Naive thymus-derived CD4-positive, alpha-beta T cell (primary cell): ENCODE measurements at regions of chr20 and their contacts with region 1.

Region 1: DNA sequence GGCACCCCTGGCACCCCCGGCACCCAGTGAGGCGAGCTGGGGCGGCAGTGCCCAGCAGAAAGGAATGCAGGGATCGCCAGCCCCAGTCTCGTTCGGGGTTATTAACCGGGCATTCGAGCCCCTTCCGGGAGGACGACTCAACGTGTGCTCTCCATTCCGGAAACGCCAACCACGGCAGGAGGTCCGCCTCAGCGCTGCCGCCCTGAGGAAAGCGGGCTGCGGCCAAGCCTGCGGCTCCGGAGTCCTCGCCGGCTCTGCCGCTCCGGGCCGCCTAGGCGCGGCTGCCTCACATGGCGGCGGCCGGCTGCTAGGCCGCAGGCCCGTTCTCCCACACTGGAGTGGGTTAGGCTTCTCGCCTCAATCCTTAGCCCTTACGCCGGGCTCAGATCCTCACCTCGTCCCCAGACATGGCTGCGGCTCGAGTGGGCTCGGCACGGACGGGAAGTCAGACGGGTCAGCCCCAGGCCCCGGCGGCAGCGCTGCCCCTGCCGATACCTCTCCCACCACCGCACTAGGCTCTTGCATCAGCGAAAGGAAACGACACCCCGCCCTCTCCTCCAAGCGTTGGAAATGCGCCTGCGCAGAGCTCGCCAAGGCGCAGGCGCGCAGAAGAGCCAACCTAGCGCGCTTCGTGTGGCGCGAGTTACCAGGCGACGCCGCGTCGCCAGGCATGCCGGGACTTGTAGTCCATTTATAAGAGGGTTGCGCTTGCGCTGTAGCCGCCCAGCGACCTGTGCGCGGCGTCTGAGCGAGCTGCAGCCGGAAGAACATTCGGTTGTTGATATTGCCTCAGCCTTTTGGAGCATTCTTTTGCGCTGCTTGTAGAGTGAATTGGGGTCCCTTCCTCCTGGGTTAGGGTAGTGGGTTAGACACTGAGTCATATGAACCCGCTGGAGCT is at the start of gene EIF2S2:
- DNase-seq: peak; percentile 88 to 97 (median 95)
- ATAC-seq: peak; percentile 95
- H3K4me3 ChIP-seq: peak within 1 kb of the TSS; percentile 92
- H3K4me3 Mint-ChIP-seq: peak within 1 kb of the TSS; percentile 87 to 98 (median 96)
- H3K27ac ChIP-seq: peak within 1 kb of the TSS; percentile 89
- H3K27ac Mint-ChIP-seq: peak within 1 kb of the TSS; percentile 96 to 99 (median 98)
- H3K4me1 ChIP-seq: peaks cover 24 to 34% of the 10 kb centered on the region in 2 donors
- H3K4me1 Mint-ChIP-seq: peaks cover 34 to 53% (median 47%) of the 10 kb centered on the region in 7 donors
- H3K27me3 ChIP-seq: no peaks in the 10 kb centered on the region
- H3K27me3 Mint-ChIP-seq: peaks cover 0 to 15% (median 0%) of the 10 kb centered on the region in 5 donors
- total RNA-seq, gene EIF2S2: 16.8 to 68.4 (median 48.6) TPM

Region 2: DNA sequence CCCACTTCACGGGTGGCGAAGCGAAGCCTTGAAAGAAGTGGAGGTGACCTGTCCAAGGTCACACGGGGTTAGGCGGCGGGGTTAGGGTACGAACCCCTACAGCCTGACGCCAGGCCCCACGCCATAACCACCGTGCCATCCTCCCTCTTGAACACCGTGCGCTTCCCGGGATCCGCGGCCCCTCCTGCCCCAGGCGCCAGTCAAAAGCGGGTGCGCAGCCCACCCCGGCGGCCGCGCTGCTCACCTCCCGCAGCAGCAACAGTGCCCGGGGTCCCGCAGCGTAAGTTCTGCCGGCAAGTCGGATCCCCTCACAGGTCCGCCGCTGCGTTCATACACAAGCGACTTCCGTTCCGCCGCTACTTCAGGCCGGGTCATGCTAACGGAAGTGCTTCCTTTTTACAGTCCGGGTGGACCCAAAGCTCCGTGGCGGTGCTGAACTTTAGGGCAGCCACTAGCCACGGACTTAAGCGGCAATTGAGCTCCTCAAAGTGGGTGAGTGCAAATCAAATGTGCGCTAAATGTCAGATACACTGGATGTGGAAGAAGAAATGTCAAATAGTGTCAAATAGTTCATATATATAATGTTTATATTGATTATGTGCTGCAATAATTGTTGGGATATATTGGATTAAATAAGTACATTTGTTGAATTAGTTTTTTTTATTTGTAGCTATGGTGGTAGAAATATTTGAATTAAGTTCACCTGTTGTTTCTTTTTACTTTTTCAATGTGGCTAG is 710.6 kb before region 1 on chr20 and contains the start of gene CDK5RAP1:
- CTCF ChIA-PET with region 1: no interaction called
- POLR2A ChIA-PET with region 1: interaction called, 10 read pairs
- intact Hi-C with region 1: loop called in 1 of 2 experiments (anchors 1 kb)
- DNase-seq: peak; percentile 62 to 84 (median 82)
- ATAC-seq: peak; percentile 98
- H3K4me3 ChIP-seq: peak within 1 kb of the TSS; percentile 93
- H3K4me3 Mint-ChIP-seq: peak within 1 kb of the TSS; percentile 92 to 99 (median 98)
- H3K27ac ChIP-seq: peak within 1 kb of the TSS; percentile 80
- H3K27ac Mint-ChIP-seq: peak within 1 kb of the TSS; percentile 89 to 94 (median 92)
- H3K4me1 ChIP-seq: peaks cover 23 to 33% of the 10 kb centered on the region in 2 donors
- H3K4me1 Mint-ChIP-seq: peaks cover 36 to 71% (median 64%) of the 10 kb centered on the region in 7 donors
- H3K27me3 ChIP-seq: no peaks in the 10 kb centered on the region
- H3K27me3 Mint-ChIP-seq: no peaks in the 10 kb centered on the region
- total RNA-seq, gene CDK5RAP1: 33.6 to 51.8 (median 49.4) TPM

Region 3: GRCh38 chr20:33554914-33555420 is 557.0 kb before region 1 on chr20:
- CTCF ChIA-PET with region 1: no interaction called
- POLR2A ChIA-PET with region 1: no interaction called
- intact Hi-C with region 1: loop called in 1 of 2 experiments (anchors 2 kb)
- DNase-seq: peak in 7 of 9 donors; percentile 72 to 92 (median 88)
- ATAC-seq: peak; percentile 98
- H3K4me3 ChIP-seq: peak overlapping the region; percentile 3
- H3K4me3 Mint-ChIP-seq: peak overlapping the region; percentile 51 to 83 (median 75)
- H3K27ac ChIP-seq: peak overlapping the region; percentile 81
- H3K27ac Mint-ChIP-seq: peak overlapping the region; percentile 90 to 98 (median 95)
- H3K4me1 ChIP-seq: peaks cover 16% of the 10 kb centered on the region in 2 donors
- H3K4me1 Mint-ChIP-seq: peaks cover 15 to 49% (median 39%) of the 10 kb centered on the region in 7 donors
- H3K27me3 ChIP-seq: no peaks in the 10 kb centered on the region
- H3K27me3 Mint-ChIP-seq: no peaks in the 10 kb centered on the region

Region 4: GRCh38 chr20:33686100-33686983 is 425.6 kb before region 1 on chr20 and contains the start of gene E2F1:
- CTCF ChIA-PET with region 1: no interaction called
- POLR2A ChIA-PET with region 1: no interaction called
- intact Hi-C with region 1: loop called (anchors 1 kb)
- DNase-seq: peak; percentile 85 to 98 (median 90)
- ATAC-seq: peak; percentile 98
- H3K4me3 ChIP-seq: peak within 1 kb of the TSS; percentile 55
- H3K4me3 Mint-ChIP-seq: peak within 1 kb of the TSS; percentile 74 to 95 (median 84)
- H3K27ac ChIP-seq: peak within 1 kb of the TSS; percentile 59
- H3K27ac Mint-ChIP-seq: peak within 1 kb of the TSS; percentile 6 to 95 (median 84)
- H3K4me1 ChIP-seq: peaks cover 3 to 27% of the 10 kb centered on the region in 2 donors
- H3K4me1 Mint-ChIP-seq: peaks cover 11 to 72% (median 38%) of the 10 kb centered on the region in 7 donors
- H3K27me3 ChIP-seq: no peaks in the 10 kb centered on the region
- H3K27me3 Mint-ChIP-seq: no peaks in the 10 kb centered on the region
- total RNA-seq, gene E2F1: 0.98 to 61.6 (median 1.6) TPM

Region 5: DNA sequence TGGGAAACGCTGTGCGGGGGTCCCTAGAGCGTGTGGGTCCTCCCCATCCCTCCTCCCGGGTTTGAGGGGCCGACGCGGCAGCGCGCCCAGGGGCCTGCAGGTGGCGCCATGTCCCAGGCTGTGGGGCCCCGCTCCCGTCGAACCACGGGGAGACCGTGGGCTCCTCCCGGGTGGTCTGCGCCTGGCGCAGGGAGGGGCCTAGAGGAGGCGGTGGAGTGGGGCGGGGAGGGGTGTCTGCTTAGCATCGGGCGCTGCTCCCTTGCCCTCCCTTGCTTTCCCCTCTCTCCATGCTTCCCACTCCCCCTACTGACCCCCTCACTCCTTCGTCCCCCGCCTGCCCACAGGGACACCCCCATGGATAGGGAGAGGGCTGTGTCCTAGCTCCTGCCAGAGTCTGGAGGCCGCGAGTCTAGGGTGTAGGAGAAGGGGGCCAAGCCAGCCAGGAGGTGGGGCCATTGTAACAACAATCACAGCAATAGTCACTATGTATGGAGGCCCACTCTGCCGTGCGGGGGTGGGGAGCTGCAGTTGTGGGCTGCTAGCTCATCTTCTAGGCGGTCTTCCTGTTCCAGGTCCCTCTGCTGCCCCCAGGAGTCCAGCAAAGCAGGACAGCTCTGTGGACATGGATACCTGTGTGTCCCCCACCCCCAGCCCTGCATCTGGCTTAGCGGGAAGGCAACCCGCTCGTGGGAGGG is 249.1 kb before region 1 on chr20:
- CTCF ChIA-PET with region 1: no interaction called
- POLR2A ChIA-PET with region 1: interaction called, 3 read pairs
- intact Hi-C with region 1: loop called in 1 of 2 experiments (anchors 5 kb)
- DNase-seq: peak in 8 of 9 donors; percentile 23 to 58 (median 43)
- ATAC-seq: peak; percentile 64
- H3K4me3 ChIP-seq: no peak overlapping the region
- H3K4me3 Mint-ChIP-seq: no peak overlapping the region
- H3K27ac ChIP-seq: no peak overlapping the region
- H3K27ac Mint-ChIP-seq: no peak overlapping the region
- H3K4me1 ChIP-seq: peaks cover 18 to 26% of the 10 kb centered on the region in 2 donors
- H3K4me1 Mint-ChIP-seq: peaks cover 18 to 31% (median 27%) of the 10 kb centered on the region in 7 donors
- H3K27me3 ChIP-seq: no peaks in the 10 kb centered on the region
- H3K27me3 Mint-ChIP-seq: peaks cover 0 to 3% (median 0%) of the 10 kb centered on the region in 5 donors

Region 6: DNA sequence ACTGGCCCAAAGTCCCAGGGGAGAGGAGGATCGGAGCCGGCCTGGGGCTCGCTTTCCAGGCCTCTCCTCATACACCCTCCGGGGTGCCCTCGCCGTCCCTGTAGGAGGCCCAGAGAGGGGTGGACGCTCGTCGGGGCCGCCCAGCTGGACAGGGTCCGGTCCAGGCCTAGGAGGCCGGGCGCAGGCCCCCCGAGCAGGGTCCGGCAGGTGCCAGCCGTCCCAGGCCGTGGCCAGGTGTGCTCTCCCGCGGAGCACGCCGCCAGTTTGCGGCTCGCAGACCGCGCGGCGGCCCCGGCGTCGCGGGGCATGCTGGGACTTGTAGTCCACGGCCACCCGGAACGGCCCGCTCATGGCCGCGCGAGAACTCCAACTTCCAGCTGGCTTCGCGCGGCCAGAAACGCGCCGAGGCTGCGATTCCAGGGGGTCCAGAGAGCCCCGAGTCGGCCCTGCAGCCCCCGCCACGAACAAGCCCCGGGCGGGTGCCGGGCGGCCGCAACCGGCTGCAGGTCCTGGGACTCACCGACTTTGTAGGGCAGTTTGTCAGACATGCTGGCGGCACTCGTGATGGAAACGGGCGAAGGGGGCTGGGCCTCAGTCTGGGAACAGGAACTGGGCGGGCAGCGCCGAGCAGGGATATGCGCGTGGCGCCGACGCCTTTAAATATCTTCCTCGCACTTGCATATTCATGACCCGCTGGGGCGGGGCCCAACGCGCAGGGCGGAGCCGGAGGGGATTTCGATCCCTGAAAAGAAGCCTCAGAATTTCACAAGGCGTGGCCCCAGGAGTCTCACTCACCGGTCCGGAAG is 191.0 kb after region 1 on chr20 and contains the start of gene AHCY:
- CTCF ChIA-PET with region 1: no interaction called
- POLR2A ChIA-PET with region 1: interaction called, 4 read pairs
- intact Hi-C with region 1: loop called in 1 of 2 experiments (anchors 1 kb)
- DNase-seq: peak; percentile 84 to 95 (median 92)
- ATAC-seq: peak; percentile 96
- H3K4me3 ChIP-seq: peak within 1 kb of the TSS; percentile 91
- H3K4me3 Mint-ChIP-seq: peak within 1 kb of the TSS; percentile 90 to 96 (median 91)
- H3K27ac ChIP-seq: peak within 1 kb of the TSS; percentile 87
- H3K27ac Mint-ChIP-seq: peak within 1 kb of the TSS; percentile 89 to 95 (median 93)
- H3K4me1 ChIP-seq: peaks cover 3 to 6% of the 10 kb centered on the region in 2 donors
- H3K4me1 Mint-ChIP-seq: peaks cover 0 to 27% (median 14%) of the 10 kb centered on the region in 7 donors
- H3K27me3 ChIP-seq: no peaks in the 10 kb centered on the region
- H3K27me3 Mint-ChIP-seq: peaks cover 0 to 2% (median 0%) of the 10 kb centered on the region in 5 donors
- total RNA-seq, gene AHCY: 19.1 to 62.9 (median 23.7) TPM